PC-9 (cell line): ENCODE measurements at regions of chr6 and their contacts with region 1.

Region 1: GRCh38 chr6:47103931-47104330 is 61.8 kb upstream of the ADGRF1 start:
- DNase-seq: peak; percentile 46 to 91
- H3K4me3 ChIP-seq: peak overlapping the region; percentile 22; the same call in 1 of the 2 replicates
- H3K27ac ChIP-seq: peak overlapping the region; percentile 96
- H3K4me1 ChIP-seq: peaks cover 69% of the 10 kb centered on the region
- H3K27me3 ChIP-seq: no peaks in the 10 kb centered on the region
- CTCF ChIP-seq: no peak

Region 2: DNA sequence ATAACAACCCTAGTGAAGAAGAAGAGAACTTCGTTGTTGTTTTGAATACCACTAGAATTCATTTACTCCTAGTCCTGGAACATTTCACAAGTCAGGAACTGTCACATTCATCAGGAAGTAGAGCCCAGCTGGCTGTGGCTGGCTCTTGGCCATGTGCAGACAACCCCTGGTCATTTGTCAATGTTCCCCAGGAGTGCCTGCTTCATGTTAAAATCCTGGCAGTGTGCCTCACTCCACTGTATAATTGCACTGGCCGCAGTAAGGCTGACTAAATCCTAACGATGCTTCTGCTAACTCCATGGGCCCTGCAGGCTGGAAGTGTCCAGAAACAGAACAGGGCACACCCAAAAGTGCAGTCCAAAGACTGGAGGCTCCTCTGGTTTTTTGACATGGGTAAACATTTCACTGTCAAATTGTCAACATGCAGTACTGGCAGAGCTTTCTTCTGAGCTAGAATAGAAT is 20.3 kb before region 1 on chr6:
- CTCF ChIA-PET with region 1: interaction called, 19 read pairs
- POLR2A ChIA-PET with region 1: no interaction called
- intact Hi-C with region 1: no loop called
- DNase-seq: peak; percentile 53 to 81
- H3K4me3 ChIP-seq: no peak overlapping the region
- H3K27ac ChIP-seq: no peak overlapping the region
- H3K4me1 ChIP-seq: peaks cover 21% of the 10 kb centered on the region
- H3K27me3 ChIP-seq: no peaks in the 10 kb centered on the region
- CTCF ChIP-seq: no peak

Region 3: DNA sequence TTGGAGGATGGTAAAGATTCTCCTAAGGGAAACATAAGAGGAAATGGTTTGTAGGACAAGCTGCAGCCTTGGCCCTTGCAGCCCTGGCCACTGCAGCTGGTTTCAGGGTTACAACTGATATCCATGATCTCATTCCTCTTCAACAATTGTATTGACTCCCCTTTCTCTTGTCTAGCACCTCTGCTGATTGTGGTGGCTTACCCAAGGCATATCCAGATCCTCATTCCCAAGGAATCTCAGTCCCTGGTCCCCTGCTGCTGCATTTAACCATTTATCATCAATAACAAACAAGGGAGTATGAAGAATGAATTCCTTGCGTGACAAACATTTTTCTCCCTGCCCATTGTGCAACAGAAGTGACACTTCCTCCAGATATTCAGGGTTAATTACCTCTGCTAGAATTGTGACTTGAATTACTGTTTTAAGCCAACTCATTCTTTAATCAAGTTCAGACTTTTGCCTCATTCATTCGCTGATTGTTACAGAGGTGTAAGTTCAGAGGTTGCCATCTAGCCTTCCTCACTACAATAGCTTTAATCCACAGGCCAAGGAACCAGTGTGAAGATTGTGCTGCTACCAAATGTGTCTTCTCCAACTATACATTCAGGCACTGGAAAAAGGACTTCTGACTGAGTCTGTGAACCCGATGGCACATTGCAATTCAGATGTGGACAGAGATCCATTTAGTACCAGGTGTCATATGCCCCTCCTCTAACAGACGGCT is 49.3 kb after region 1 on chr6:
- CTCF ChIA-PET with region 1: interaction called, 6 read pairs
- POLR2A ChIA-PET with region 1: interaction called, 4 read pairs
- intact Hi-C with region 1: loop called (anchors 1 kb)
- DNase-seq: peak; percentile 65 to 99
- H3K4me3 ChIP-seq: no peak overlapping the region
- H3K27ac ChIP-seq: peak overlapping the region; percentile 97
- H3K4me1 ChIP-seq: peaks cover 60% of the 10 kb centered on the region
- H3K27me3 ChIP-seq: no peaks in the 10 kb centered on the region
- CTCF ChIP-seq: no peak

Region 4: DNA sequence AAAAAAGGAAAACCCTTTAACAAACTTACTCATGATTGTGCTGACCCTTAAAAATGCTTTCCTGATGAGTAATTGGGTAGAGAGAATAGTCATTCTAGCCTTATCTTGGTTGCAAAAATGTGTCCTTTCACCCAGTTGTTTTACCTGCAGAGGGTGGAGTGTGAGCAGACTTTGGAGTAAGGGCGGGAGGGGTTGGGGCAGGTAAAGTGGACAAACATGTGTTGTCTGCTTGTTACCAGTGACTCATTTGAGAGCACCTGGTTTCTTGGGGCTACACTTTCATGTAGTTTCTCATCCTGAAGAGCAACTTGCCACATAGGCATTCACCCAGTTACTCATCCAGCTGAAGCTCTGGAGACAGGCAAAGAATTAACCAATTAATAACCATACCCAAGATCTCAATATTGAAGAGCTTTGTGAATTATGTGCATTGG is 84.7 kb after region 1 on chr6:
- CTCF ChIA-PET with region 1: interaction called, 3 read pairs
- POLR2A ChIA-PET with region 1: no interaction called
- intact Hi-C with region 1: loop called (anchors 1 kb)
- DNase-seq: peak; percentile 71 to 99
- H3K4me3 ChIP-seq: 0 out of 2 replicates have a peak overlapping the region, but pooled peaks have one; percentile 2
- H3K27ac ChIP-seq: peak overlapping the region; percentile 93
- H3K4me1 ChIP-seq: peaks cover 56% of the 10 kb centered on the region
- H3K27me3 ChIP-seq: no peaks in the 10 kb centered on the region
- CTCF ChIP-seq: no peak

Region 5: GRCh38 chr6:47477497-47478232 is 373.7 kb after region 1 on chr6 and contains the start of gene CD2AP:
- CTCF ChIA-PET with region 1: no interaction called
- POLR2A ChIA-PET with region 1: interaction called, 26 read pairs
- intact Hi-C with region 1: no loop called
- DNase-seq: peak; percentile 80 to 85
- H3K4me3 ChIP-seq: peak within 1 kb of the TSS; percentile 95
- H3K27ac ChIP-seq: peak within 1 kb of the TSS; percentile 97
- H3K4me1 ChIP-seq: peaks cover 38% of the 10 kb centered on the region
- H3K27me3 ChIP-seq: no peaks in the 10 kb centered on the region
- CTCF ChIP-seq: no peak; the same call in 1 of the 2 replicates
- total RNA-seq, gene CD2AP: 48.8 and 55.5 TPM in 2 replicates